Endothelial cell of umbilical vein (primary cell): ENCODE measurements at regions of chr7 and their contacts with region 1.

Region 1: GRCh38 chr7:108497082-108497725 is 28.7 kb downstream of the PNPLA8 start:
- DNase-seq: peak; percentile 73
- H3K4me3 ChIP-seq: no peak overlapping the region
- H3K27ac ChIP-seq: no peak overlapping the region
- H3K4me1 ChIP-seq: peaks cover 8% of the 10 kb centered on the region
- H3K27me3 ChIP-seq: no peaks in the 10 kb centered on the region
- CTCF ChIP-seq: peak; percentile 43 to 61
- POLR2A ChIP-seq: no peak

Region 2: GRCh38 chr7:107538001-107538400 is 959.2 kb before region 1 on chr7:
- CTCF ChIA-PET with region 1: no interaction called
- POLR2A ChIA-PET with region 1: no interaction called
- dilution Hi-C with region 1: no loop called
- intact Hi-C with region 1: no loop called
- DNase-seq: no peak
- H3K4me3 ChIP-seq: no peak overlapping the region
- H3K27ac ChIP-seq: no peak overlapping the region
- H3K4me1 ChIP-seq: no peaks in the 10 kb centered on the region
- H3K27me3 ChIP-seq: no peaks in the 10 kb centered on the region
- CTCF ChIP-seq: no peak
- POLR2A ChIP-seq: no peak

Region 3: GRCh38 chr7:108114117-108114841 is 382.9 kb before region 1 on chr7:
- CTCF ChIA-PET with region 1: interaction called, 10 read pairs
- POLR2A ChIA-PET with region 1: no interaction called
- dilution Hi-C with region 1: no loop called
- intact Hi-C with region 1: loop called (anchors 1 kb)
- DNase-seq: peak; percentile 65
- H3K4me3 ChIP-seq: no peak overlapping the region
- H3K27ac ChIP-seq: no peak overlapping the region
- H3K4me1 ChIP-seq: peaks cover 8% of the 10 kb centered on the region
- H3K27me3 ChIP-seq: no peaks in the 10 kb centered on the region
- CTCF ChIP-seq: peak; percentile 29 to 42
- POLR2A ChIP-seq: no peak

Region 4: DNA sequence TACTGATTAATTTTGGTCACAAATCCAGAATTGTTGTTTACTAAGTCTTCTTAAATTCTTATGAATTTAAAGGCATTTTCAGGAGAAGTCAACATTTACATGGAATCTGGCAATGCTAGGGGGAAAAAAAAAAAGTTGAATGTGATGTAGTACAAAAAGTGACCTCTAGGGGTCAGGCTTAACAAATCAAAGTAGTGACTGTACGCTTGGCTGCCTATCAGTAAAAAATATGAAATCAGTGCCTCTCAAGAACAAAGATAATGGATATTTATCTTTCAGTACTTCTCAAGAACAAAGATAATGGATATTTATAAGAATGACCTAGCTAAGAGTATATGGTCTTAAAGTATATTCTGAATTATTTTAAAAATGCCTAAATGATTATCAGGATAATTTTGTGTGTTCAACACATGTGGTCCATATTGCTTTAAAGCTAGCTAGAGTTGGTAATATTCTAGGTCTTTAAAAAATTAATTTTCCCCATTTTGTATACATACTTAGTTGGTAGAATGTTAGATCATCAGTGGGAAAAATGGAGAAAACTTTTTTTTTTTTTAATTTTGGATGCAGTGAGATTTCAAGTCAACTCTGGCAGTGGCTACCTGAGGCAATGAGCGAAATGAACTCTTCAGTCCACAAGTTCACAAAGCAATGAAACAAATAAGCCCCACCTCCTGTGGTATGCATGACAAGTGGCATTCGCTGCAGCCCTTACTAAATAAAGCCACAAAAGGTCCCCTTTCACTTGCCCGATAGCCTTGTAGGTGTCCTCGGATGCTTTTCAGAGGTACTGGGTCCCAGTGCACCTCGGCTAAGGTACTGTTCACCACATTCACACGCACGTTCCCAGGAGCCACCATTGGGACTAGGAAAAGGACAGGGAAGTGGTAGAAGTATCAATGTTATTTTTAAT is 315.9 kb before region 1 on chr7:
- CTCF ChIA-PET with region 1: interaction called, 25 read pairs
- POLR2A ChIA-PET with region 1: no interaction called
- dilution Hi-C with region 1: loop called (anchors 25 kb)
- intact Hi-C with region 1: loop called (anchors 1 kb)
- DNase-seq: peak; percentile 86
- H3K4me3 ChIP-seq: no peak overlapping the region
- H3K27ac ChIP-seq: no peak overlapping the region
- H3K4me1 ChIP-seq: no peaks in the 10 kb centered on the region
- H3K27me3 ChIP-seq: no peaks in the 10 kb centered on the region
- CTCF ChIP-seq: peak; percentile 32 to 54
- POLR2A ChIP-seq: no peak

Region 5: DNA sequence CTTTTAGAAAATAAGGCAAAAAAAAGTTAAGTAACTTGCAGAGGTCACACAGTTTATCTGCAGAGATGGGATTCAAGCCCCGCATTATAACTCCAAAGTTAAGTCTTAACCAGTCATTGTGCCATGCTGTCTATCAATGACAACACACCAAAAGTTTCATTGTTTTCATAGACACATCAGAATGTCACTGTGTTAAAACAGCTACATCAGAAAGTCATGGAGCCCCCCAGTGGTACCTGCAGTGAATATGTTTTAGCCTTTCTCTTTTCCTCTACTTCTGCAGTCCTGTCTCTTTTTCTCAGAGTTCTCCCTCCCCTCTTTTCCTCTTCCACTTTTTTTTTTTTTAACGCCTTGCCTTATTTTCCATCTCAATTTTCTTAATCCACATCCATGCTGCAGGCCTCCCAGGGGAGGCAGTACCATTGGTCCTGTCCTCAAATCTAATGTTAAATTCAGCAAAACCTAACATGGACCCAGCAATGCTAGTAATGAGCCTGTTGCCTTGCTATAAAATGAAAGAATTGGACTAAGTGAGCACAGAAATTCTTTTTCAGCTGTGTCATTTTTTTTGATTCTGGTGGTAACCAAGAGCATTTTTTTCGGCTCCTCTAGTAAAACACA is 37.2 kb before region 1 on chr7:
- CTCF ChIA-PET with region 1: interaction called, 88 read pairs
- POLR2A ChIA-PET with region 1: no interaction called
- dilution Hi-C with region 1: no loop called
- intact Hi-C with region 1: no loop called
- DNase-seq: peak; percentile 59
- H3K4me3 ChIP-seq: no peak overlapping the region
- H3K27ac ChIP-seq: no peak overlapping the region
- H3K4me1 ChIP-seq: peaks cover 6% of the 10 kb centered on the region
- H3K27me3 ChIP-seq: no peaks in the 10 kb centered on the region
- CTCF ChIP-seq: peak; percentile 60 to 65
- POLR2A ChIP-seq: no peak

Region 6: GRCh38 chr7:108486291-108486966 is 10.8 kb before region 1 on chr7:
- CTCF ChIA-PET with region 1: interaction called, 12 read pairs
- POLR2A ChIA-PET with region 1: no interaction called
- dilution Hi-C with region 1: no loop called
- intact Hi-C with region 1: no loop called
- DNase-seq: peak; percentile 46
- H3K4me3 ChIP-seq: no peak overlapping the region
- H3K27ac ChIP-seq: peak overlapping the region; percentile 18
- H3K4me1 ChIP-seq: peaks cover 34% of the 10 kb centered on the region
- H3K27me3 ChIP-seq: no peaks in the 10 kb centered on the region
- CTCF ChIP-seq: no peak
- POLR2A ChIP-seq: no peak

Region 7: DNA sequence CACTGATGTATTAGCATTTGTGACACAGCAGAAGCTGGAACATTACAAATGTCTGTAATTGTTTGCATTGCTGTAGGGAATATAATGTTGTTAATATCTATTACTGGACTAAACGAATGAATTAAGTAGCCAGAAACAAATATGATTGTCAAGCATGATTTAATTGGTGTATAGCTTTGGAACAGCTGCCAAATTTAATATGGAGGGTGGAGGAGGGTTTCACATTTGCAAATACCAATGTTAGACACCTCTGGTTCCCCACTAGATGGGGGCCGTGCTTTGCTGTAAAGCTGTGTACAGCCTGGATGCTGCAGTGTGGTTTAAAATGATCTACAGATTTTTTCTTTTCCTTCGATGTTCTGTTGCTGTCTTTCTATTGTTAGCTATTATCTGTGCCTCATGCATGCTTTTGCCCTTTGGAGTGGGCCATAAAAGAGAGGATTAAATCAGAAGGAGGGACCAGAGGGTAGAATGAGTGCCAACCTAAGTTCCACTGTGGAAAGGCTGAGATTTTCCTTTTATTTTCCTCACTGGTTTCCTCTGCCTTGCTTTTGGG is 95.5 kb after region 1 on chr7:
- CTCF ChIA-PET with region 1: no interaction called
- POLR2A ChIA-PET with region 1: no interaction called
- dilution Hi-C with region 1: no loop called
- intact Hi-C with region 1: no loop called
- DNase-seq: no peak
- H3K4me3 ChIP-seq: no peak overlapping the region
- H3K27ac ChIP-seq: no peak overlapping the region
- H3K4me1 ChIP-seq: no peaks in the 10 kb centered on the region
- H3K27me3 ChIP-seq: peaks cover 14 to 16% of the 10 kb centered on the region in 2 experiments
- CTCF ChIP-seq: no peak
- POLR2A ChIP-seq: no peak